Gastrocnemius medialis (tissue), 4 donors: ENCODE measurements at regions of chr1 and their contacts with region 1.

Region 1: GRCh38 chr1:203267347-203267846 is 37.9 kb upstream of the BTG2 start:
- DNase-seq: peak; percentile 66 to 86
- ATAC-seq: peak; percentile 73 to 78
- H3K4me3 ChIP-seq: peak overlapping the region; percentile 62 to 70 (median 66)
- H3K27ac ChIP-seq: peak overlapping the region; percentile 86 to 93 (median 88)
- H3K4me1 ChIP-seq: peaks cover 34 to 35% of the 10 kb centered on the region in 2 donors
- H3K27me3 ChIP-seq: no peaks in the 10 kb centered on the region
- CTCF ChIP-seq: peak; percentile 93 to 97 (median 94)
- POLR2A ChIP-seq: peak in 1 of 2 donors; percentile 11

Region 2: GRCh38 chr1:203117611-203118575 is 149.5 kb before region 1 on chr1:
- in situ Hi-C with region 1: no loop called
- intact Hi-C with region 1: loop called (anchors 5 kb)
- DNase-seq: peak; percentile 60 to 73
- ATAC-seq: peak; percentile 77 to 90
- H3K4me3 ChIP-seq: peak overlapping the region in 2 of 4 donors; percentile 16 to 22
- H3K27ac ChIP-seq: no peak overlapping the region
- H3K4me1 ChIP-seq: peaks cover 6 to 9% of the 10 kb centered on the region in 2 donors
- H3K27me3 ChIP-seq: no peaks in the 10 kb centered on the region
- CTCF ChIP-seq: peak; percentile 72 to 90 (median 88)
- POLR2A ChIP-seq: no peak

Region 3: DNA sequence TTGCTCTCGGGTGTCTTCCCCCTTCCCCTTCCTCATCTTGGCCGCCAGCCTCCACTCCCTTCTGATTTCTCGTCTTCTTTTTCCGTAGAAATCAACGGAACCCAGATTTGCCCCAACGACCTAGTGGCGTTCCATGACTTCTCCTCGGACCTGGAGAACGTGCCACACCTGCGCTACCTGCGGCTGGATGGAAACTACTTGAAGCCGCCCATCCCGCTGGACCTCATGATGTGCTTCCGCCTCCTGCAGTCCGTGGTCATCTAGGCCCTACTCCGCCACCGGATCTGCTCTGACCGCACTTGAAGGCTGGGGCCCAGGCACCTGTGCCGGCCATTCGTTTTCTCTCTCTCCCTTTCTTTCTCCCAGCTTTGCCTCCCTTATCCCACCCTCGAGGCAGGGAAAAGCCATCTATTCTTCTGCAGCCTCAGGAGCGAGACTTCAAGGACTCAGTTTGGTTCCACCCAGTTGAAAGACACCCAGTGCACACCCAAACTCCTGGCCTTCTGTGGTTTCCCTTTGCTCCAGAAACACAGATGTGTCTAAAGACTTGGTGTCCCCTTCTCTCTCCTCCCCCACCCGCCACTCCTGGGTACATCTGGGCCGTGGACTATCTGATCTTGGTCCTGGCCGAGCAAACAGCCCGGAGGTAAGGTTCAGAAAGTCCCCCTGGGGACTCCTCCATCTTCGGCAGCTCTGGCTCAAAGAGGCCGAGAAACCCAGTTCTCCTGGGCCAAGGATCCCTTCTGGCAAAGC is 219.4 kb after region 1 on chr1:
- in situ Hi-C with region 1: loop called (anchors 5 to 10 kb)
- intact Hi-C with region 1: loop called (anchors 1 kb)
- DNase-seq: no peak
- ATAC-seq: peak; percentile 26 to 32
- H3K4me3 ChIP-seq: peak overlapping the region; percentile 33 to 87 (median 56)
- H3K27ac ChIP-seq: peak overlapping the region; percentile 60 to 75 (median 70)
- H3K4me1 ChIP-seq: no peaks in the 10 kb centered on the region
- H3K27me3 ChIP-seq: no peaks in the 10 kb centered on the region
- CTCF ChIP-seq: no peak
- POLR2A ChIP-seq: no peak

Region 4: DNA sequence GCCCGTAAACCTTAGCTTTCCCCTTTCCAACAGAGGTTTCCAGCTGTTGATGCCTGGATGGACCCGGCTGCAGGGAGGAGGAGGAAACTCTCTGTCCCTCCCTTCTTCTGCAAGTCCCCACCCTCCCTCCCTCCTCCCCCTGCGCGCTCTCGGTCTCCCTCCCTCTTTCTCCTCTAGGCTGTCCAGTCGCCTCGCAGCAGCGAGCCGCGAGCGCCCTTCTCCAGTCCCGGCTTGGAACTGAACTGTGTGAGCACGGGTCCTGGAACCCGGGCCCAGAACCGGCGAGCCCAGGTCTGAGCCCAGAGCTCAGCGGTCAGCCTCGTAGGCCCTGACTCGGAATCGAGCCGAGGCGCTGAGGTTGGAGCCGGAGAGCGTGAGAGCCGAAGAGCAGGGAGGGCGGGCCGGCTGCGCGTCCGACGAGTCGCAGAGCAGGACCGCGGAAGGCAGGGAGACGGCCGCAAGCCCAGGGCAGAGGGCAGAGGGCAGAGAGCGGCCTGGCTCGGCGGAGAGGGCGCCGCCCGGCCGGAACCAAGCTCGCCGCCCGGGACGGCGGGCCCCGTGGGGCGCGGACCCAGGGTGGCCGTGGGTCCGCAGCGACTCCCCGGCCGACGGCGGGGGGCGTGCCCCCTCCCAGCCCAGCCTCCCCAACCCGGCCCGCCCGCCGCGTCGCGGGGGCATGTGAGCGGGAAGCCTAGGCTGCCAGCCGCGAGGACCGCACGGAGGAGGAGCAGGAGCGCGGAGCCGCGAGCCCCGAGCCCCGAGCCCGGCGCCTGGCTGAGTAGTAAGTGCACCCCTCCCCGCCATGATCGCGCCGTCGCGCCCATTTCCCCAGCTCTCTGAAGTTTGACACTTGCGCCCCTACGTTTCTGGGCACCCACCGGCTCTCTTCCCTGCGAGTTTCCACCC is 805.8 kb after region 1 on chr1 and contains the start of gene SOX13:
- in situ Hi-C with region 1: no loop called
- intact Hi-C with region 1: loop called (anchors 10 kb)
- DNase-seq: peak; percentile 79
- ATAC-seq: peak; percentile 77 to 80
- H3K4me3 ChIP-seq: peak within 1 kb of the TSS; percentile 85 to 91 (median 88)
- H3K27ac ChIP-seq: peak within 1 kb of the TSS; percentile 76 to 94 (median 90)
- H3K4me1 ChIP-seq: peaks cover 23 to 28% of the 10 kb centered on the region in 2 donors
- H3K27me3 ChIP-seq: no peaks in the 10 kb centered on the region
- CTCF ChIP-seq: peak in 2 of 5 experiments; percentile 25 to 31
- POLR2A ChIP-seq: peak; percentile 84 to 86
- total RNA-seq, gene SOX13: 15.6 to 31.1 (median 16.3) TPM